Transverse colon (tissue), 4 donors: ENCODE measurements at regions of chr17 and their contacts with region 1.

Region 1: GRCh38 chr17:43871951-43872695 is 25.1 kb downstream of the CD300LG start:
- DNase-seq: peak; percentile 82
- H3K4me3 ChIP-seq: peak overlapping the region in 3 of 4 donors; percentile 1 to 40 (median 13)
- H3K27ac ChIP-seq: peak overlapping the region; percentile 66 to 85 (median 75)
- H3K4me1 ChIP-seq: peaks cover 3 to 31% (median 21%) of the 10 kb centered on the region in 4 donors
- H3K27me3 ChIP-seq: peaks cover 1% of the 10 kb centered on the region
- CTCF ChIP-seq: no peak
- EP300 ChIP-seq: no peak
- POLR2A ChIP-seq: peak; percentile 18

Region 2: DNA sequence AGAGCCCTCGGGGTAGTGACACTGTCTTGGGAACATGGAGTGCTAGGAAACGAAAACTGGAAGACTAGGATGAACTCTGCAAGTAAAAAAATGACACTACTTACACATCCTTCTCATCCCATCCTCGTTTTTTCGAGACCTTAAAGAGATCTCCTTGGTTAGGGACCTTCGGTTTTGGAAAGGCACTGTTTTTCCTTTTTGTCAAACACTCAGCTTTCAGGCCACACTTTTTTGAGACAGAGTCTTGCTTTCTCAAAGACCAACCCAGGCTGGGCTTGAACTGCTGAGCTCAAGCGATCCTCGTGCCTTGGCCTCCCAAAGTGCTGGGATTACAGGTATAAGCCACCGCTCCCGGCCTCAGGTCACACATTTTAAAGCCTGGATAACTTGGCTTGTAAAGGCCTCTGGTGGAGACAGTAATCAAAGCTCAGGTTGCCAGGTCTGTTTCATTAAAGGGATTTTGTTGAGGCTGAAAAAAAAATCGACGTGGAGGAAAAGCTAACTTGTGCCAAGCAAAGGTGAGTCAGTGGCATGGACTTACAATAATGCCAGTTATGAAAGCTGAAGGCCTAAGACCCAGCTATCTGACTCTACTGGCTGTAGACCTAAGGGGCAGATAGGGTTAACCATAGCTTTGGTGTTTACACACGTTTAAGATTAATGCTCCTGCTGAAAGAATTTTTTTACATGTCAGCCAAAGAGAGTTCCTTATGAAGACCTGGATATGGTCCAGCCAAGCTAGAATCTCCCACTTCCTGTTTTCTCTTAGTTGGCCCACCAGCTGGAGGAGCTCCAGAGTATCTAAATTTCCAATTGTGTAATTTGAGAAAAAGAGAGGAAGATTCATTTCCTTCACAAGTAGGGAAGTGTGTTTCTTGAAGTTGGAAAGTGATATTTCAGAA is 700.3 kb before region 1 on chr17:
- in situ Hi-C with region 1: no loop called
- intact Hi-C with region 1: no loop called
- DNase-seq: peak; percentile 49
- H3K4me3 ChIP-seq: peak overlapping the region; percentile 55 to 84 (median 72)
- H3K27ac ChIP-seq: peak overlapping the region; percentile 95 to 99 (median 98)
- H3K4me1 ChIP-seq: peaks cover 34 to 79% (median 70%) of the 10 kb centered on the region in 4 donors
- H3K27me3 ChIP-seq: no peaks in the 10 kb centered on the region
- CTCF ChIP-seq: peak in 3 of 5 experiments; percentile 20 to 33 (median 31)
- EP300 ChIP-seq: no peak
- POLR2A ChIP-seq: no peak

Region 3: DNA sequence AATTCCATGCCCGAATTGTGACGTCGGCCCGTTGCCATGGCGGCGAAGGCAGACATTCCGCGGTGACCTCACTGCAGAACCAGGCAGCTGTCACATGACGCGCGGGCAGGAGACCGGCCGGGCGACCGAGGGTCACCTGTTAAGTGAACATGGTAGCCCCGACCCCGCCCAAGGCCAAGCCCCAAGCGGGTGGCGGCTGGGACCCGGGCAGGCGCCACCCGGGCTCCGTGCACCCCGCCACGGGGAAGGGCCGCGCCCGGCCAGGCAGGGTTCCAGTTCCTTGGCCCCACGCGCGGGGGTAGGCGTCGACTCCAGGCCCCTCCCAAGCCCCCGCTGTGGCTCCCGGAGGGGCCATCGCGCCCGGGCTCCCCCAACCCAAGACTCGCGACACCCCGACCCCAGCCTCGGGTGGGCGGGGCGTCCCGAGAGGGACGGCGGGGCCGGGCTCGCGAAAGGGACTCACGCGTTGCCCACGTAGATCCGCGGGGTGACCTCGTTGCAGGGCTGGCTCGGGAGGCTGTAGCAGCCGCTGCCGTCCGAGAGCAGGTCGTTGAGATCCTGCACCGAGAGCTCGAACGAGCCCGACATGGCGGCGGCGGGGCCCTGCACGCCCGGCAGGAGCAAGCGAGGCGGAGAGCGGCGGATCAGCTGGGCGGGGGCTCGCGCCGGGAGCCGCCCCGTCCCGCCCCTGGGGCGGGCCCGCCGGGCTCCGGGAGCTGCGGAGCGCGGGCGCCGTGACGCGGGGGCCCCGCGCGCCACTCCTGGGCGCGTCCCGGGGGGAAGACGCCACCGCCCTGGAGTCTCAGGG is 93.6 kb before region 1 on chr17 and contains the start of gene DUSP3:
- in situ Hi-C with region 1: no loop called
- intact Hi-C with region 1: no loop called
- DNase-seq: peak; percentile 96
- H3K4me3 ChIP-seq: peak within 1 kb of the TSS; percentile 79 to 99 (median 88)
- H3K27ac ChIP-seq: peak within 1 kb of the TSS; percentile 96 to 100 (median 100)
- H3K4me1 ChIP-seq: peaks cover 11 to 23% (median 19%) of the 10 kb centered on the region in 4 donors
- H3K27me3 ChIP-seq: peaks cover 15% of the 10 kb centered on the region
- CTCF ChIP-seq: peak in 1 of 5 experiments; percentile 24
- EP300 ChIP-seq: peak; percentile 56
- POLR2A ChIP-seq: peak; percentile 89
- total RNA-seq, gene DUSP3: 52.7 to 145 (median 70.9) TPM

Region 4: GRCh38 chr17:43861024-43861621 is 11.0 kb before region 1 on chr17:
- in situ Hi-C with region 1: no loop called
- intact Hi-C with region 1: loop called (anchors 1 kb)
- DNase-seq: no peak
- H3K4me3 ChIP-seq: no peak overlapping the region
- H3K27ac ChIP-seq: no peak overlapping the region
- H3K4me1 ChIP-seq: no peaks in the 10 kb centered on the region
- H3K27me3 ChIP-seq: peaks cover 18% of the 10 kb centered on the region
- CTCF ChIP-seq: no peak
- EP300 ChIP-seq: no peak
- POLR2A ChIP-seq: no peak

Region 5: GRCh38 chr17:44066204-44066930 is 194.2 kb after region 1 on chr17 and contains the start of gene LSM12:
- in situ Hi-C with region 1: no loop called
- intact Hi-C with region 1: no loop called
- DNase-seq: peak; percentile 94
- H3K4me3 ChIP-seq: peak within 1 kb of the TSS; percentile 45 to 76 (median 67)
- H3K27ac ChIP-seq: peak within 1 kb of the TSS; percentile 92 to 98 (median 95)
- H3K4me1 ChIP-seq: peaks cover 12 to 43% (median 24%) of the 10 kb centered on the region in 4 donors
- H3K27me3 ChIP-seq: no peaks in the 10 kb centered on the region
- CTCF ChIP-seq: no peak
- EP300 ChIP-seq: no peak
- POLR2A ChIP-seq: peak; percentile 59
- total RNA-seq, gene LSM12: 5.4 to 29.2 (median 22.9) TPM